Left ventricle myocardium inferior (tissue), 1 donor: ENCODE measurements at regions of chr15 and their contacts with region 1.

Region 1: GRCh38 chr15:93030430-93031105 is 58.4 kb downstream of the RGMA start:
- DNase-seq: peak; percentile 68
- H3K4me3 ChIP-seq: no peak overlapping the region
- H3K27ac ChIP-seq: peak overlapping the region; percentile 92
- H3K4me1 ChIP-seq: peaks cover 57% of the 10 kb centered on the region
- H3K27me3 ChIP-seq: no peaks in the 10 kb centered on the region
- CTCF ChIP-seq: peak; percentile 92

Region 2: DNA sequence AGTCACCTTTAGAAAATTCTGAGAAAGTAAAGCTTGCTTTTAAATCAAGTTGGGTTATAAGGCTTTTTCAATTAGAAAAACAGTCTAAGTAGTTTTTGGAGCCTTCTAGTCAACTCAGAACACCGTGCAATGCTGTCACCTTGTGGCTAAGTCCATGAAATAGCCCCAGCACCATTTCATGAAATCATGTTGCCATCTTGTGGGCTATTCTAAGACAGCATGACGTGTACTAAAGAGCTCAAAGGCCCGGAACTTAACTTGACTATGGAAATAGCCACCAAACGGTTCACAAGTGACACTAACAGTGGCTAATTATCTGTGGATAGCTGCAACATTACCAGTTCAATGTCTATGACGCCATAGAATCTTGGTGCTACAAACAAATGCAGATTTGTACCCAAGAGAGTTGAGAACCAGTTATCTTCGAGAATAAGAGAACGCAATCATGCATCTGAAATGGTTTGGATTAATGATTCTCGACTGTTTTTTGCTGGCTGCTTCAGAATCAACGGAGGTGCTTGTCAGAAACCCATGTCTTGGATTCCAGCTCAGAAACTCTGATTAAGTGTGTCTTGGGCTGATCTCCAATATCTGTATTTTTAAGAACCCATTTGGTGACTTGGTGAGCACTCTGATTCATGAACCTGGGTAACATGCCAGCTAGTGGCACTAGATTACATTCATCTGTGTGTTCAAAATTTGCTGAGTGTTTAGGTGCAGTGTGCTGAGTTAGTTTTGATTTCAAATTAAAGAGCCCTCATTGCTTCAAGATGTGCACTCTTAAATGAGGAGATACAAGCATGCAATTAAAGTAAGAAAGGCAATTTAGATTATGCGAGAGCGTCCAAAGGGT is 1089.6 kb after region 1 on chr15:
- intact Hi-C with region 1: loop called (anchors 5 kb)
- DNase-seq: peak; percentile 27
- H3K4me3 ChIP-seq: no peak overlapping the region
- H3K27ac ChIP-seq: peak overlapping the region; percentile 73
- H3K4me1 ChIP-seq: peaks cover 6% of the 10 kb centered on the region
- H3K27me3 ChIP-seq: no peaks in the 10 kb centered on the region
- CTCF ChIP-seq: peak; percentile 88

Region 3: GRCh38 chr15:94324117-94324826 is 1293.7 kb after region 1 on chr15:
- intact Hi-C with region 1: loop called (anchors 10 kb)
- DNase-seq: no peak
- H3K4me3 ChIP-seq: no peak overlapping the region
- H3K27ac ChIP-seq: no peak overlapping the region
- H3K4me1 ChIP-seq: no peaks in the 10 kb centered on the region
- H3K27me3 ChIP-seq: peaks cover 3% of the 10 kb centered on the region
- CTCF ChIP-seq: peak; percentile 96